Activated T-helper 2 cell treated with anti-CD3 and anti-CD28 coated beads, Interferon-gamma antibody, Interleukin-2, Interleukin-4, amounts not matched to agents 10 μg/mL and 5 μg/mL and 100 μg/mL, durations not matched to agents 14 hours and 24 hours and 36 hours (primary cell): ENCODE measurements at regions of chr3 and their contacts with region 1.

Region 1: GRCh38 chr3:168095611-168096209 is at the start of gene GOLIM4:
- DNase-seq: peak; percentile 62
- H3K4me3 Mint-ChIP-seq: peak within 1 kb of the TSS; percentile 88
- H3K27ac Mint-ChIP-seq: peak within 1 kb of the TSS; percentile 90
- H3K4me1 Mint-ChIP-seq: peaks cover 24% of the 10 kb centered on the region
- H3K27me3 Mint-ChIP-seq: peaks cover 34% of the 10 kb centered on the region
- total RNA-seq, gene GOLIM4: 17.2 and 18.3 TPM in 2 replicates

Region 2: GRCh38 chr3:167734498-167735232 is 361.0 kb before region 1 on chr3 and contains the start of gene PDCD10:
- intact Hi-C with region 1: loop called (anchors 2 kb)
- DNase-seq: peak; percentile 95
- H3K4me3 Mint-ChIP-seq: no peak within 1 kb of the TSS
- H3K27ac Mint-ChIP-seq: no peak within 1 kb of the TSS
- H3K4me1 Mint-ChIP-seq: peaks cover 16% of the 10 kb centered on the region
- H3K27me3 Mint-ChIP-seq: peaks cover 7% of the 10 kb centered on the region
- total RNA-seq, gene PDCD10: 73.8 and 80.9 TPM in 2 replicates

Region 3: DNA sequence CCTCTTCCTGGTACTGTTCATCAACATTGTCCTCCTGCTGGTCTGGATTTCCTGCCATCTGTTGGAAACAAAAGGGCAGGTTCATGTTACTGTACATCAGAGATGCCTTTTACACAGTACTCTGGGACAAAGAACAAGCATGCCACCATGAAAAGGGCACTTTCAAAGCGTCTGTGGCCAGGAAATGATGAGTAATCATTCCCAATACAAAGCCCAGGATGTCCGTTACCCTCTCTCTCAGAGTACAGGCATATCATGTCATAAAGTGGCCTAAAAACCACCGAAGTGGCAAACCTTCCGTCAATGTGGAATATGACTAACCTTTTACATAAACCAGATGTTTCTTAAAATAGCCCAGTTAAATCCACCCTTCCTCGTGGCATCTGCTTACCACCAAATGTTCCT is 71.2 kb before region 1 on chr3:
- intact Hi-C with region 1: loop called (anchors 1 kb)
- DNase-seq: peak; percentile 10
- H3K4me3 Mint-ChIP-seq: peak overlapping the region; percentile 49
- H3K27ac Mint-ChIP-seq: peak overlapping the region; percentile 97
- H3K4me1 Mint-ChIP-seq: peaks cover 55% of the 10 kb centered on the region
- H3K27me3 Mint-ChIP-seq: no peaks in the 10 kb centered on the region

Region 4: DNA sequence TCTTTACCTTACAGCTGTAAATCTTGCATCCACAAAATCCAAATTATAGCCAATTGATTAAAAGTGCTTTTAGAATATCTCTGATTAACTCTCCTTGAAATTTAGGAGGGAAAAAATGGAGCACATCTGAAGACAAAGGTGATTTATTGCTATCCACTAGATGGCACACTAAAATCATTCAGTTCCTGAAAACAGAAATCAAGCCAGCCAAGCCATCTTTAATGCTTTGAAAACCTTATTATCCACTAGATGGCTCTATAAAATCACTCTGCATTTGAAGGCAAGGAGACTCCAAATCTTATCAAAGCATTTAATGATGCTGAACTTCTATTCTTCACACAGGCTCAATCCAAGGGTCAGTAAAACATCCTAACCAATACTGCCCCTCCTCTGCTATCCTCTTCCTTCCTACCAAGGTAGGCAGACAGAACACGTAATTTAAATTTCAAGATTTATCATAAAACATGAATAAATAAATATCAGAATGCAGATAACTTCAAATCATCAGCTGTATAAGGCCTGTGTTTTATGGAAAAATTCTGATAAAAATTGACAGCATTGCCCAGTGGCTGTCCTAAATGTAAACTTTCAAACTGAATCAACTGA is 48.4 kb before region 1 on chr3:
- intact Hi-C with region 1: loop called (anchors 1 kb)
- DNase-seq: no peak
- H3K4me3 Mint-ChIP-seq: no peak overlapping the region
- H3K27ac Mint-ChIP-seq: no peak overlapping the region
- H3K4me1 Mint-ChIP-seq: no peaks in the 10 kb centered on the region
- H3K27me3 Mint-ChIP-seq: peaks cover 1% of the 10 kb centered on the region

Region 5: GRCh38 chr3:168061332-168061996 is 34.2 kb before region 1 on chr3:
- intact Hi-C with region 1: loop called (anchors 1 kb)
- DNase-seq: no peak
- H3K4me3 Mint-ChIP-seq: peak overlapping the region; percentile 55
- H3K27ac Mint-ChIP-seq: peak overlapping the region; percentile 65
- H3K4me1 Mint-ChIP-seq: peaks cover 26% of the 10 kb centered on the region
- H3K27me3 Mint-ChIP-seq: peaks cover 1% of the 10 kb centered on the region

Region 6: GRCh38 chr3:168071591-168072322 is 24.0 kb before region 1 on chr3:
- intact Hi-C with region 1: loop called (anchors 1 kb)
- DNase-seq: no peak
- H3K4me3 Mint-ChIP-seq: no peak overlapping the region
- H3K27ac Mint-ChIP-seq: no peak overlapping the region
- H3K4me1 Mint-ChIP-seq: peaks cover 13% of the 10 kb centered on the region
- H3K27me3 Mint-ChIP-seq: no peaks in the 10 kb centered on the region

Region 7: DNA sequence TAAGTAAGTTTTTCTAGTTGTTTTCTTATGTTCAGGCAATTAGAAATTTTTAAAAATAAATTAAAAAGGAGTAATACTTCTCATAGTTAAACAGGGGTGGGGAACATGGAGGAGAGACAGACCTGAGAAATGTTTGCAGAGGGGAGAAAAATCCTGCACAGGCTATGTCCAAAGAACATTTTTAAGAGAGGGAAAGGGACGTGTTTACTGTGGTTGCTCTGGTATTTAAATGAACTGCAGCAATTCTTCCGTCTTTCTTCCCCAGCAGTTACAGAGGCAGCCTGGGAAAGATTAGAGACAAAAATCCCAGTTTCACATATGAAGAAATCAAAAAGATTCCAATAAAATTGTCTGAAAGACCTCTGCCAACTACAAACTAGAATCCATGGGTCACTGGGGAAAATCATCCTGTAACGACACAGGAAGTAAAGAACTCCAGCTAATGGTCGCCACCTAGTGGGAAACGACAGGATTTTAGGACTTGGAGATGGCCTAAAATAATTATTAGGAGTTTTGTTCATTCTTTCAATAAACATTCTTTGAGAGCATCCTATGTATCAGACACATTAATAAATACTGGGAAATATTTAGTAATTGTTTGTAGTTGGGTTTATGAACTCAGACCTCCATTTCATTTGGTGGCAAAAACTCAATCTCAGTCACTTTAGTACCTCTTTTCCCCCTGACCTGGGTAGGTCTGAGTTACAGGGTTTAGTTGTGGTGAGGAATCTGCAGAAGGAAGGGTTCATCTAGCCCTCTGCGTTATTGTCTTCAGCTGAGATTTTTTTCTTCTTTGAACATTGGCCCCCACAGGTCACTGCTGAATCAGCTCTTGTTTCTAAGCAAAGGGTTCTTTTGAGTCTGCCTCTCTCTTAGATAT is 69.9 kb after region 1 on chr3:
- intact Hi-C with region 1: loop called (anchors 2 kb)
- DNase-seq: no peak
- H3K4me3 Mint-ChIP-seq: no peak overlapping the region
- H3K27ac Mint-ChIP-seq: no peak overlapping the region
- H3K4me1 Mint-ChIP-seq: peaks cover 1% of the 10 kb centered on the region
- H3K27me3 Mint-ChIP-seq: peaks cover 2% of the 10 kb centered on the region

Region 8: GRCh38 chr3:168558728-168559411 is 463.2 kb after region 1 on chr3:
- intact Hi-C with region 1: no loop called
- DNase-seq: no peak
- H3K4me3 Mint-ChIP-seq: no peak overlapping the region
- H3K27ac Mint-ChIP-seq: no peak overlapping the region
- H3K4me1 Mint-ChIP-seq: no peaks in the 10 kb centered on the region
- H3K27me3 Mint-ChIP-seq: no peaks in the 10 kb centered on the region